Activated CD8-positive, alpha-beta T cell treated with anti-CD3 and anti-CD28 coated beads for 36 hours (primary cell): ENCODE measurements at regions of chr14 and their contacts with region 1.

Region 1: DNA sequence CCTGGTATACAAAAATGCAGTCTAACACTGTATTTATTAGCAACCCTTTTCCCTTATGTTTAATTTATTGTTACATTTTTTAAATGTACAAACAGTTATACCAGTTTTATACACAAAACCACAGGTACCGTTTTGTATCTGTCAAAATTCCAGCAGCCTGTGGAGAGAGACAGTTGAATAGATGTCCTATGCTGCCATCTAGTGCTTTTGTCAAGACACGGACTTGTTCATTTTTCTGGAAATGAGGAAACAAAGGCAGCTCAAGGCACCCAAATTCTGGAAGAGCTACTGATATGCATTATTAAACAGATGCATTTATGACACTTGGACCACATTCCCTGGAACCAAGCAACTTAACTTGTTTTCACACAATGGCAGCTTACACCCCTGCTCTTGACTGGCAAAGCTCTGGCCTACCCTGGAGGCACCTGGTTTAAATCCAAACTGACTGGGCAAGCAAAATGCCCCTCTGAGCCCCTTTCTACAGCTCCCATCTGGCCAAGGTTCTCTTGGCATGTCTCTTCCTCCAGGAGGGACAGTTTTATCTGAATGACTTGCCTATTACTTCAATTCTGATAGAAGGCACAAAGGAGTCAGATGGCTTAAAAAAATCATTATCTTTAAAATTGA is 286.9 kb upstream of the PRKD1 start:
- DNase-seq: no peak
- ATAC-seq: no peak
- H3K4me3 Mint-ChIP-seq: no peak overlapping the region
- H3K27ac Mint-ChIP-seq: no peak overlapping the region
- H3K4me1 Mint-ChIP-seq: no peaks in the 10 kb centered on the region
- H3K27me3 Mint-ChIP-seq: no peaks in the 10 kb centered on the region
- CTCF ChIP-seq: peak; percentile 52

Region 2: DNA sequence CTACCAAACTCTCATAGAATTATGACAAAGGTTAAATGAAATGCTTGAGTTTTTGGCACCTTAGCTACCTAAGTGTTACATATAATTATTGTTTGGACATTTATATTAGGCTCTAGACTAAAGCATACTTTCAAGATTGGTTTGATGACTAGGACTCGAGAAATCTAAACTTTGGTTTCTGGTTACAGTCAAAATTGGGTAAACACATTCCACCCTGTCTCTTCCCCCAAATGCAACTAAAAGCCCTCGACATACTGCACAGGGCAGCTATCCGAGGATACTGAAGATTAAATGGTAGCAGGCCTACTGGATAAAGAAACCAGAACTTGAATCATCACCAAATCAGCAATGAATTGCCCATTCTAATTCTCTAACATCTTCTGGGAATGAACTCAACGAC is 656.1 kb before region 1 on chr14:
- CTCF ChIA-PET with region 1: no interaction called
- POLR2A ChIA-PET with region 1: no interaction called
- intact Hi-C with region 1: loop called (anchors 10 kb)
- DNase-seq: no peak
- ATAC-seq: no peak
- H3K4me3 Mint-ChIP-seq: no peak overlapping the region
- H3K27ac Mint-ChIP-seq: no peak overlapping the region
- H3K4me1 Mint-ChIP-seq: no peaks in the 10 kb centered on the region
- H3K27me3 Mint-ChIP-seq: no peaks in the 10 kb centered on the region
- CTCF ChIP-seq: no peak